ENCODE measurements at regions of chr6 and their contacts with region 1.

Region 1: GRCh38 chr6:41787219-41787917 is at the start of gene TOMM6:
- DNase-seq: peak; percentile 93
- CTCF ChIP-seq: peak; percentile 92

Region 2: GRCh38 chr6:41581381-41581991 is 205.9 kb before region 1 on chr6:
- CTCF ChIA-PET with region 1: no interaction called
- POLR2A ChIA-PET with region 1: no interaction called
- DNase-seq: no peak
- CTCF ChIP-seq: no peak

Region 3: GRCh38 chr6:41735427-41736356 is 51.7 kb before region 1 on chr6 and contains the start of gene TFEB:
- CTCF ChIA-PET with region 1: interaction called, 22 read pairs
- POLR2A ChIA-PET with region 1: interaction called, 3 read pairs
- DNase-seq: peak; percentile 96
- CTCF ChIP-seq: peak; percentile 97

Region 4: DNA sequence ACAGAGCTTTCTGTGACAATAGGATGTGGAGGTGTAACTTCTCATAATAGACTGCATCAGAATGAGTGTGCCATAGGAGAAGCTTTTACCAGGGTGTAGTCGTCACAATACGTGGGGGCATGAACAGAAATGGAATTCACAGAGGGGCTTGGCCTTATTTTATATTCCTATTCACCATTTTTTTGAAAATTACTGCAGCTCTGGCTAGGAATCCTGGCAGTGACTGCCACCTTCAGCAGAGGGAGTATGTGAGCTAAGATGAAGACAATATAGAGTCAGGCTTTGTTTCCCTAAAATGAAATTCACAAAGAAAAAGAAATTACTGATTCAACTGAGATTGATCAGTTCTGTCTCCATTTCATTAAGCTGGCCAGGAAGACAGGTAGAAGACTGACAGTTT is 14.0 kb after region 1 on chr6:
- CTCF ChIA-PET with region 1: interaction called, 38 read pairs
- POLR2A ChIA-PET with region 1: no interaction called
- DNase-seq: no peak
- CTCF ChIP-seq: peak; percentile 54

Region 5: DNA sequence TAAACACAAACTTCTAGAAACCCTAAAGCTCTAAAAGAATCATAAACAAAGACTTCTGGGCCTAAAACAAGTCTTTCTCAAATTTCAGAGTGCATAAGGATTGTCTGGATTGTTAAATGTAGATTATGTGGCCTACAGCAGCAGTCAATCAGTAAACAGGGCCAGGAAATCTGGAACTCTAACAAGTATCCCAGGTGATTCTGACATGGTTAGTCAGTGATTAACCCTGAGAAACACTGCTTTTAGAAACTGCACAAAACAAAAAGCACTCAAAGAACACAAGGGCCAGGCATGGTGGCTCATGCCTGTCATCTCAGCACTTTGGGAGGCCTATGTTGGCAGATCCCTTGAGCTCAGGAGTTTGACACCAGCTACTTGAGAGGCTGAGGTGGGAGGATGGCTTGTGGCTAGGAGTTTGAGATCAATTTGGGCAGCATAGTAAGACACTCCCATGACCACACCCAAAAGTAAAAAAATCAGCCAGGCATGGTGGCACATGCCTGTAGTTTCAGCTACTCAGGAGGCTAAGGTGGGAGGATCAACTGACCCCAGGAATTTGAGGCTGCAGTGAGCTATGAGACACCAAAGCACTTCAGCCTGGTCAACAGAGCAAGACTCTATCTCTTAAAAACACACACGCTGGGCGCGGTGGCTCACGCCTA is 127.6 kb after region 1 on chr6:
- CTCF ChIA-PET with region 1: interaction called, 54 read pairs
- POLR2A ChIA-PET with region 1: no interaction called
- DNase-seq: no peak
- CTCF ChIP-seq: no peak

Region 6: GRCh38 chr6:41941280-41942066 is 154.1 kb after region 1 on chr6 and contains the start of gene CCND3:
- CTCF ChIA-PET with region 1: interaction called, 26 read pairs
- POLR2A ChIA-PET with region 1: no interaction called
- DNase-seq: peak; percentile 94
- CTCF ChIP-seq: no peak

Region 7: DNA sequence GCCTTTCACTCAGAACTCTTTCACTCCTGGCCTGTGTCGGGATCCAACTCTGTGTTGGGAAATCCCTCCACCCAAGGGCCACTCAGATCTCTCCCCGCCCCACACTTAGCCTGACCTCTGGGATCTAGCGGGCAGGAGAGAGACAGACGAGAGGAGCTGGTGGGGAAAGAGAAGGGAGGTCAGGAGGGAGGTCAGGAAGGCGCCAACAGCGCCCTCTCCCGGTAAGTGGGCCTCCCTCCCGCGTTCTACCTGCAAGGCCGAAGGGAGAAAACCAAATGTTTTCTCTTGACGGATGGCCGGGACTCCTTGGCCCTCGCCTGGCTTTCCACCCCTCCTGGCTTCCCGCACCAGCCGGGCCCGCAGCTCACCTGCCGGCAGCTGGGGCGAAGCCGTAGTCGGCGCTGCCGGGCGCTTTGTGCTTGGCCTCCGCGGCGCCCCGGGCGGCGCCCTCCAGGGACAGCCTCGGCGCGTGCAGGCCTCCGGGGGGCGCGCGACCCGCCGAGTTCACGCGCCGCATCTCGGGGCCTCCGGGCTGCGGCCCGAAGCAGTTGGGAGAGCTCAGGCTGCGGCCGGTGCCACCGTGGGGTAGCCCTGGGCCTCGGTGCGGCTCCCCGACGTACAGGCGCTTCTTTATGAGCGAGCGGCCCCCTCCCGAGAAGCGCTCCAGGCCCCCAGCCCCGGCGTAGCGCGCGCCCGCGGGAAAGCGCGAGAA is 316.9 kb after region 1 on chr6:
- CTCF ChIA-PET with region 1: interaction called, 16 read pairs
- POLR2A ChIA-PET with region 1: no interaction called
- DNase-seq: peak; percentile 90
- CTCF ChIP-seq: peak; percentile 82